CD14-positive monocyte (primary cell): ENCODE measurements at regions of chr5 and their contacts with region 1.

Region 1: DNA sequence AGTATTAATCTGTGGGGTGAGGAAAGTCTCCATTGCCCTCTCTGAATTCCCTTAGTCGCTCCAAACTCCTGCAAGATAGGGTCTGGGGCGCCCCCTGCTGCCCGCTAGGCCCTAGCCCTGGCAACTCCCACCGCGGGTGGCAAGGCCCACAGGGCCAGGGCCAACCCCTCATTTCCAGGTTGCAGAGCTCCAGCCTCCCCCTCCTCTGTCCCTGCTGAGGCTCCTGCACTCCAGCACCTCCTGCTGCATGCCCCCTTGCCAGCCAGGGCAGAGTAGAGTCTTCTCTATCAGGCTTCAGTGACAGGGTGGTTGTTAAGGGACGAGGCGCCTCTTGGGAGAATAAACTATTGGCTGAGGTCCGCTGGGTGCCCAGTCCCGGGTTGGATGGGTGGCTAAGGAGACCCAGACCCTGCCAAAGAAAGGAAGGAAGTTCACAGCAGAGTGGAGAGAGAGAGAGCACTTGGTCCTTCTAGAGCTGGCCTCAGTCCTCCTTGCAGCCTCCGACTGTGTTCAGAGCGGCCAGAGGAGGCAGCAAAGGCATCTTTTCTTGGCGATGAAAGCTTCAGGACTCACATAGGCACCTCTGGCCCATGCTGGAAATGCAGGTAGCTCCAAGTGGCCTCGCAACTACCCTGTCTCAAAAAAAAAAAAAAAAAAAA is 45.6 kb downstream of the SAR1B start:
- DNase-seq: peak; percentile 48 to 69 (median 58)
- H3K4me3 ChIP-seq: no peak overlapping the region
- H3K4me3 Mint-ChIP-seq: peak overlapping the region; percentile 34 to 72
- H3K27ac ChIP-seq: no peak overlapping the region
- H3K27ac Mint-ChIP-seq: no peak overlapping the region
- H3K4me1 ChIP-seq: peaks cover 4 to 5% of the 10 kb centered on the region in 2 donors
- H3K4me1 Mint-ChIP-seq: peaks cover 6% of the 10 kb centered on the region
- H3K27me3 ChIP-seq: no peaks in the 10 kb centered on the region
- H3K27me3 Mint-ChIP-seq: peaks cover 0 to 4% (median 1%) of the 10 kb centered on the region in 3 donors
- CTCF ChIP-seq: peak; percentile 94

Region 2: DNA sequence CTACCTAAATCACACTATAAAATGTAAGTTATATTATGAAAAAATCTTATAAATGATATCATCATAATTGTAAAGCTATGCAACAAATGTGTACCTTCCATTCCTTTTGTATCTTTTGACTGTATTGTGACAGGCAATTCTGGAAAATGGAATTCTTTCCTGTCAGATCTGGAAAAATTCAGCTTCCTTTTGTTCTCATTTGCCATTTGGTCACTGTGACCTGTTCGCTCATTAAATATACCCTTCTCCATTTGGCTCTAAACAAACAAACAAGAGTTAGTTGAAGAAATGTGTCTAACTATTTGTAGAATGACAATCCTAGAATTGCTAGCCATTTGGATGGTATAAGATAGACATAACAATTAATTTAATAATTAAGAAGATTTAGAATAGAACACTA is 282.7 kb before region 1 on chr5:
- intact Hi-C with region 1: loop called (anchors 2 to 5 kb)
- DNase-seq: no peak
- H3K4me3 ChIP-seq: no peak overlapping the region
- H3K4me3 Mint-ChIP-seq: no peak overlapping the region
- H3K27ac ChIP-seq: no peak overlapping the region
- H3K27ac Mint-ChIP-seq: no peak overlapping the region
- H3K4me1 ChIP-seq: no peaks in the 10 kb centered on the region
- H3K4me1 Mint-ChIP-seq: no peaks in the 10 kb centered on the region
- H3K27me3 ChIP-seq: no peaks in the 10 kb centered on the region
- H3K27me3 Mint-ChIP-seq: peaks cover 0 to 3% (median 2%) of the 10 kb centered on the region in 3 donors
- CTCF ChIP-seq: no peak

Region 3: GRCh38 chr5:134527146-134527960 is 59.6 kb before region 1 on chr5:
- intact Hi-C with region 1: no loop called
- DNase-seq: peak; percentile 60 to 69 (median 60)
- H3K4me3 ChIP-seq: peak overlapping the region; percentile 72 to 98 (median 93)
- H3K4me3 Mint-ChIP-seq: peak overlapping the region; percentile 90 to 97
- H3K27ac ChIP-seq: peak overlapping the region; percentile 23 to 95
- H3K27ac Mint-ChIP-seq: peak overlapping the region; percentile 41 to 89 (median 86)
- H3K4me1 ChIP-seq: peaks cover 14 to 25% of the 10 kb centered on the region in 2 donors
- H3K4me1 Mint-ChIP-seq: peaks cover 23% of the 10 kb centered on the region
- H3K27me3 ChIP-seq: no peaks in the 10 kb centered on the region
- H3K27me3 Mint-ChIP-seq: peaks cover 1 to 7% (median 1%) of the 10 kb centered on the region in 3 donors
- CTCF ChIP-seq: peak; percentile 65

Region 4: DNA sequence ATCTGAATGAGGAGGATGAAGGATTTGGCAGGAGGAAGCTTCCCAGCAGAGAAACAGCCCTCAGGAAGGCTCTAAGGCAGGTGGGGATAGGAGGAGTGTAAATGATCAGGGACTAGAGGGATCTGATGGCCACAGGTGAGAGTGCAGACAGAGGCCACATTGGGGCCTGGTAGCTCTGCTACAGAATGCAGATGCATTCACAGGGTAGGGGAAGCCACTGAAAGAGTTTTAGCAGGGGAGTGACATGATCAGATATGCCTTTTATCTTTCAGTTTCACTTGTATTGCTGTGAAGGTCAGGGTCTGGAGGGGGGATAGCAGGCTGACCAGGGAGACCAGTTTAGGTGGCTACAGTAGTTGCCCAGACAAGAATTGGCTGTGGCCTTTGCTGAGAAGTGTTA is 290.2 kb after region 1 on chr5:
- intact Hi-C with region 1: no loop called
- DNase-seq: no peak
- H3K4me3 ChIP-seq: no peak overlapping the region
- H3K4me3 Mint-ChIP-seq: no peak overlapping the region
- H3K27ac ChIP-seq: no peak overlapping the region
- H3K27ac Mint-ChIP-seq: peak overlapping the region in 4 of 7 donors; percentile 4 to 35 (median 8)
- H3K4me1 ChIP-seq: peaks cover 13 to 20% of the 10 kb centered on the region in 2 donors
- H3K4me1 Mint-ChIP-seq: peaks cover 25% of the 10 kb centered on the region
- H3K27me3 ChIP-seq: no peaks in the 10 kb centered on the region
- H3K27me3 Mint-ChIP-seq: peaks cover 0 to 2% (median 0%) of the 10 kb centered on the region in 3 donors
- CTCF ChIP-seq: no peak